Transverse colon (tissue), 4 donors: ENCODE measurements at regions of chr16 and their contacts with region 1.

Region 1: GRCh38 chr16:27179500-27180072 is 23.7 kb upstream of the KDM8 start:
- DNase-seq: peak; percentile 92
- H3K4me3 ChIP-seq: no peak overlapping the region
- H3K27ac ChIP-seq: no peak overlapping the region
- H3K4me1 ChIP-seq: peaks cover 0 to 8% (median 0%) of the 10 kb centered on the region in 4 donors
- H3K27me3 ChIP-seq: no peaks in the 10 kb centered on the region
- CTCF ChIP-seq: peak; percentile 95 to 98 (median 96)
- EP300 ChIP-seq: no peak
- POLR2A ChIP-seq: no peak

Region 2: GRCh38 chr16:27080870-27081269 is 98.7 kb before region 1 on chr16:
- in situ Hi-C with region 1: no loop called
- intact Hi-C with region 1: no loop called
- DNase-seq: no peak
- H3K4me3 ChIP-seq: no peak overlapping the region
- H3K27ac ChIP-seq: no peak overlapping the region
- H3K4me1 ChIP-seq: no peaks in the 10 kb centered on the region
- H3K27me3 ChIP-seq: peaks cover 11% of the 10 kb centered on the region
- CTCF ChIP-seq: peak; percentile 18 to 58 (median 35)
- EP300 ChIP-seq: no peak
- POLR2A ChIP-seq: no peak

Region 3: DNA sequence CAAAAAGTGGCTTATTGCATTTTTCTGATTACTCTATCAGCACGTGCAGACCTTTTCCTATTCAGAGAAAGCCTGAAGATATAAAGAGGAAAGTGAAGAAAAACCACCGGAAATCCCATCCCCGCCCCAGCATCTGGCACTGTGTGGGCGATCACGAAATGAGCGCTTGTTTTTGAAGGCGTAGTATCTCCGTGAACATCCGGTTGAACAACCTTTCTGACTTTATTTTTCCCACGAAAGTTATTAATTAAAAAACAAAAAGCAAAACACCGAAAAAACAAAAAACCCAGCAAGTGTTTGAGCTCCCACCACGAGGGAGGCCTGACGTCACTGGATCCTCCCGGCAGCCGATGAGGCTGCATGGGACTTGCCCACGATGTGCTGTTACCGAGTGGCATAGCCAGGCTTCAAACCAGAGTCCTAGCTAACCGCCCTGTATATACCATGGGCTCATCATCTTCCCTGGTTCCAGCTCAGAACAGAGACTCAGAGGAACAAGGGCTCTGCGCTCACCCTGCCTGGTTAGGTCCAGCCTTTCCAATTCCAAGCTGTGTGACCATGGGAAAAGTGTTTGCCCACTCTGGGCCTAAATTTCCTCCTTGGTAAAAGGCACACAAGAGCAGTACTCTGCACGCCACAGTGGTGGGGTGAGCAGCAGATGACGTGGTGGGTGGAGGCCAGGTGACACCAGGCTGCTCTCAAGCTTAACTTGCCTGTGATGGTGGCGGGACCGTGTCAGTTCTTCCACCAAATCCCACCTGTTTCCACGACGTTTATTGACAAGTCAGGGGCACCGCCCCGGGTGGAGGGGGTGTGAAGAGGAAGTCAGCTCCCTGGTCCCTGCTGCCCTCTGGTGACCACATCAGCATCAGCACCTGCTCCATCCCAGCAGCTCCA is 188.1 kb after region 1 on chr16:
- in situ Hi-C with region 1: loop called (anchors 5 to 10 kb)
- intact Hi-C with region 1: loop called (anchors 1 kb)
- DNase-seq: peak; percentile 88
- H3K4me3 ChIP-seq: peak overlapping the region in 1 of 4 donors; percentile 15
- H3K27ac ChIP-seq: peak overlapping the region; percentile 53 to 76 (median 61)
- H3K4me1 ChIP-seq: peaks cover 9 to 35% (median 27%) of the 10 kb centered on the region in 4 donors
- H3K27me3 ChIP-seq: no peaks in the 10 kb centered on the region
- CTCF ChIP-seq: peak; percentile 79 to 89 (median 82)
- EP300 ChIP-seq: no peak
- POLR2A ChIP-seq: no peak

Region 4: GRCh38 chr16:27374804-27375425 is 195.3 kb after region 1 on chr16:
- in situ Hi-C with region 1: loop called (anchors 5 to 10 kb)
- intact Hi-C with region 1: no loop called
- DNase-seq: peak; percentile 58
- H3K4me3 ChIP-seq: no peak overlapping the region
- H3K27ac ChIP-seq: peak overlapping the region in 2 of 4 donors; percentile 34 to 49
- H3K4me1 ChIP-seq: peaks cover 0 to 8% (median 0%) of the 10 kb centered on the region in 4 donors
- H3K27me3 ChIP-seq: no peaks in the 10 kb centered on the region
- CTCF ChIP-seq: peak; percentile 18 to 61 (median 43)
- EP300 ChIP-seq: no peak
- POLR2A ChIP-seq: no peak

Region 5: GRCh38 chr16:27449434-27450195 is 270.0 kb after region 1 on chr16:
- in situ Hi-C with region 1: loop called in 2 of 4 experiments (anchors 10 kb)
- intact Hi-C with region 1: no loop called
- DNase-seq: peak; percentile 59
- H3K4me3 ChIP-seq: no peak overlapping the region
- H3K27ac ChIP-seq: no peak overlapping the region
- H3K4me1 ChIP-seq: no peaks in the 10 kb centered on the region
- H3K27me3 ChIP-seq: peaks cover 22% of the 10 kb centered on the region
- CTCF ChIP-seq: no peak
- EP300 ChIP-seq: no peak
- POLR2A ChIP-seq: no peak

Region 6: DNA sequence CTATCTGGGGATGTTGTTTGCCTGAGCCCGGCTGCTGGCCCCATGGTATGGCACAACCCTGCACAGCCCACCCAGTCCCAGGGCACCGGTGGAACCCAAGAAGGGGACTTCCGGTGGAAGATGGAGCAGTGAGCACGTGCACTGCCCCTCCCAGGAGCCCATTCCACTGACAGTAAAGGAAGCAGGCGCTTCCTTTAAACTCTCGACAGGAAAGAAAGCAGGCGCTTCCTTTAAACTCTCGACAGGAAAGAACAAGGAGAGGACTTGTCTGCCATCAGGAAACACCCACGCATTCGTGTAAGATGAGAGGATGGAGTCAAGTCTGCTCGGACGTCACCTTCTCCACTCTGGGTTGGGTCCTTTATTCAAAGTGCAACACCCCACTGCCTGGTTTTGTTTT is 276.1 kb after region 1 on chr16:
- in situ Hi-C with region 1: loop called in 2 of 4 experiments (anchors 10 kb)
- intact Hi-C with region 1: loop called (anchors 5 kb)
- DNase-seq: no peak
- H3K4me3 ChIP-seq: no peak overlapping the region
- H3K27ac ChIP-seq: no peak overlapping the region
- H3K4me1 ChIP-seq: no peaks in the 10 kb centered on the region
- H3K27me3 ChIP-seq: peaks cover 3% of the 10 kb centered on the region
- CTCF ChIP-seq: no peak
- EP300 ChIP-seq: no peak
- POLR2A ChIP-seq: no peak